ENCODE measurements at regions of chr17 and their contacts with region 1.

Region 1: DNA sequence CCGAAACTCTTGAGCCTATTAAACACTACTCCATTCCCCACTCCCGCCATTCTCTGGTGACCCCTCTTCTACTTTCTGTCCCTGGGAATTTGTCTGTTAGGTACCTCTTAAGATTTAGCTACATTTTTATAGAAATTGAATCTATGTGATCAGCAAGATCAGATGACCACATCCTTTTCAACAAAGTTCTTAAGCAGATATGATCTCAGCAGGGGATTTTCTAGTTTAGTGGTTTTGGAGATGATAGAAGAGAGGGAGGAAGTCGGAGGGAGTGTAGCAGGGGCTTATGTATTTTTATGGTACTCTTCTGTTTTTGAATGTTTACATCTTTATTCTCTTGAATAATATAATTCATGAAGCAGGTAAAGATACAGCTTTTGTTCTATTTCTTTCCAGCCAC is 40.8 kb downstream of the RPA1 start:
- DNase-seq: peak; percentile 84
- H3K4me3 Mint-ChIP-seq: peak overlapping the region; percentile 72
- H3K27ac Mint-ChIP-seq: peak overlapping the region; percentile 92
- H3K4me1 Mint-ChIP-seq: peaks cover 71% of the 10 kb centered on the region
- H3K27me3 Mint-ChIP-seq: no peaks in the 10 kb centered on the region

Region 2: GRCh38 chr17:1752425-1753262 is 117.9 kb before region 1 on chr17:
- intact Hi-C with region 1: no loop called
- DNase-seq: no peak
- H3K4me3 Mint-ChIP-seq: no peak overlapping the region
- H3K27ac Mint-ChIP-seq: no peak overlapping the region
- H3K4me1 Mint-ChIP-seq: no peaks in the 10 kb centered on the region
- H3K27me3 Mint-ChIP-seq: peaks cover 4% of the 10 kb centered on the region

Region 3: GRCh38 chr17:1829592-1830257 is 40.9 kb before region 1 on chr17 and contains the starts of genes RPA1 and SMYD4:
- intact Hi-C with region 1: loop called (anchors 1 kb)
- DNase-seq: peak; percentile 98
- H3K4me3 Mint-ChIP-seq: peak within 1 kb of the TSS; percentile 89
- H3K27ac Mint-ChIP-seq: peak within 1 kb of the TSS; percentile 89
- H3K4me1 Mint-ChIP-seq: peaks cover 53% of the 10 kb centered on the region
- H3K27me3 Mint-ChIP-seq: no peaks in the 10 kb centered on the region
- total RNA-seq, gene RPA1: 234 and 238 TPM in 2 replicates
- total RNA-seq, gene SMYD4: 27.1 and 30.7 TPM in 2 replicates

Measured in activated CD4-positive, alpha-beta T cell treated with anti-CD3 and anti-CD28 coated beads, Interleukin-2, amount 10 ng/mL, durations not matched to agents 24 days and 14 days (primary cell).